Activated CD4-positive, alpha-beta T cell treated with anti-CD3 and anti-CD28 coated beads for 36 hours (primary cell): ENCODE measurements at regions of chr12 and their contacts with region 1.

Region 1: GRCh38 chr12:6335451-6336078 is 6.3 kb downstream of the TNFRSF1A start:
- DNase-seq: peak; percentile 94
- ATAC-seq: peak; percentile 83
- H3K4me3 Mint-ChIP-seq: no peak overlapping the region
- H3K27ac Mint-ChIP-seq: no peak overlapping the region
- H3K4me1 Mint-ChIP-seq: peaks cover 21% of the 10 kb centered on the region
- H3K27me3 Mint-ChIP-seq: no peaks in the 10 kb centered on the region

Region 2: GRCh38 chr12:6323340-6323994 is 12.1 kb before region 1 on chr12:
- CTCF ChIA-PET with region 1: interaction called, 21 read pairs
- POLR2A ChIA-PET with region 1: no interaction called
- intact Hi-C with region 1: no loop called
- DNase-seq: peak; percentile 58
- ATAC-seq: peak; percentile 81
- H3K4me3 Mint-ChIP-seq: peak overlapping the region; percentile 24
- H3K27ac Mint-ChIP-seq: peak overlapping the region; percentile 89
- H3K4me1 Mint-ChIP-seq: peaks cover 32% of the 10 kb centered on the region
- H3K27me3 Mint-ChIP-seq: no peaks in the 10 kb centered on the region

Region 3: DNA sequence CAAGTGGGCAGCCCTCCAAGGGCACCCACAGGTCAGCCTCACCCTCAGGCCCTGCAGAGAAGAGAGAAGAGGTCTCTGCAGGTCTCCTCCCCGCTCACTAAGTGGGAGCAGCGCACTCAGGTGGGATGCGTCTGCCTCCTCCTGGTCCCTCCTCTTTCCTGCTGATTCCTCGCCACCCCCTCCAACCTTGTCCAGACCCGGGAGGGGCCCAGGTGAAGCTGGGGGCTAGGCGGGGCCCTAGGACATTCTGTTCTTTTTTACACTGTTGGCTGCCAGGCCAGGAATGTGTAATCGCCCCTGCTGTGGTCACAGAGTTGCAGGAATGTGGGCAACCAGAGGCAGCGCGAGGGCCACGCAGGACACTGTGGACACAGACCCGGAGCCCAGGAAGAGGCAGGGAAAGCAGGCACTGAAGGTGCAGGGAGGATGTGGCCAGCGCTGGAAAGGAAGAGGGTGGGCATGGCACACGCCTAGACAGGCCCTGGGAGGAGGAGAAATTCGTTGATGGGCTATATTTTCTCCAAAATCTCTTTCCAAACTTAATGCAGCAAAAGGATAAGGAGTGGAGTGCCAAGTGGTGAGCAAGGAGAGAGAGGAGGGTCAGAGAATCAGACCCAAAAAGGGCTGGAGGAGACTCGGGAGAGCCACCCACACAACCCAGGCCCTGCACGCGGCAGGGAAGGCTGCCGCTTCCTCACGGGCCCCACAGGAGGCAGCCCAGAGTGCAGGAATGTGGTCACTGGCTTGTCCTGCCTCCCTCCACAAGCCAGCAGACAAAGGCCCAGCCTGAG is 40.7 kb after region 1 on chr12:
- CTCF ChIA-PET with region 1: interaction called, 3 read pairs
- POLR2A ChIA-PET with region 1: no interaction called
- intact Hi-C with region 1: loop called in 1 of 2 experiments (anchors 5 kb)
- DNase-seq: peak; percentile 34
- ATAC-seq: peak; percentile 38
- H3K4me3 Mint-ChIP-seq: no peak overlapping the region
- H3K27ac Mint-ChIP-seq: peak overlapping the region; percentile 75
- H3K4me1 Mint-ChIP-seq: peaks cover 26% of the 10 kb centered on the region
- H3K27me3 Mint-ChIP-seq: peaks cover 4% of the 10 kb centered on the region

Region 4: GRCh38 chr12:6430124-6430989 is 94.8 kb after region 1 on chr12:
- CTCF ChIA-PET with region 1: interaction called, 3 read pairs
- POLR2A ChIA-PET with region 1: no interaction called
- intact Hi-C with region 1: loop called in 1 of 2 experiments (anchors 2 kb)
- DNase-seq: peak; percentile 84
- ATAC-seq: no peak
- H3K4me3 Mint-ChIP-seq: peak overlapping the region; percentile 1
- H3K27ac Mint-ChIP-seq: peak overlapping the region; percentile 80
- H3K4me1 Mint-ChIP-seq: peaks cover 80% of the 10 kb centered on the region
- H3K27me3 Mint-ChIP-seq: no peaks in the 10 kb centered on the region

Region 5: GRCh38 chr12:6470375-6471163 is 135.0 kb after region 1 on chr12 and contains the start of gene VAMP1:
- CTCF ChIA-PET with region 1: interaction called, 13 read pairs
- POLR2A ChIA-PET with region 1: interaction called, 7 read pairs
- intact Hi-C with region 1: loop called in 1 of 2 experiments (anchors 1 kb)
- DNase-seq: peak; percentile 99
- ATAC-seq: peak; percentile 91
- H3K4me3 Mint-ChIP-seq: peak within 1 kb of the TSS; percentile 91
- H3K27ac Mint-ChIP-seq: peak within 1 kb of the TSS; percentile 82
- H3K4me1 Mint-ChIP-seq: peaks cover 52% of the 10 kb centered on the region
- H3K27me3 Mint-ChIP-seq: no peaks in the 10 kb centered on the region
- total RNA-seq, gene VAMP1: 34.5 to 52.3 TPM

Region 6: DNA sequence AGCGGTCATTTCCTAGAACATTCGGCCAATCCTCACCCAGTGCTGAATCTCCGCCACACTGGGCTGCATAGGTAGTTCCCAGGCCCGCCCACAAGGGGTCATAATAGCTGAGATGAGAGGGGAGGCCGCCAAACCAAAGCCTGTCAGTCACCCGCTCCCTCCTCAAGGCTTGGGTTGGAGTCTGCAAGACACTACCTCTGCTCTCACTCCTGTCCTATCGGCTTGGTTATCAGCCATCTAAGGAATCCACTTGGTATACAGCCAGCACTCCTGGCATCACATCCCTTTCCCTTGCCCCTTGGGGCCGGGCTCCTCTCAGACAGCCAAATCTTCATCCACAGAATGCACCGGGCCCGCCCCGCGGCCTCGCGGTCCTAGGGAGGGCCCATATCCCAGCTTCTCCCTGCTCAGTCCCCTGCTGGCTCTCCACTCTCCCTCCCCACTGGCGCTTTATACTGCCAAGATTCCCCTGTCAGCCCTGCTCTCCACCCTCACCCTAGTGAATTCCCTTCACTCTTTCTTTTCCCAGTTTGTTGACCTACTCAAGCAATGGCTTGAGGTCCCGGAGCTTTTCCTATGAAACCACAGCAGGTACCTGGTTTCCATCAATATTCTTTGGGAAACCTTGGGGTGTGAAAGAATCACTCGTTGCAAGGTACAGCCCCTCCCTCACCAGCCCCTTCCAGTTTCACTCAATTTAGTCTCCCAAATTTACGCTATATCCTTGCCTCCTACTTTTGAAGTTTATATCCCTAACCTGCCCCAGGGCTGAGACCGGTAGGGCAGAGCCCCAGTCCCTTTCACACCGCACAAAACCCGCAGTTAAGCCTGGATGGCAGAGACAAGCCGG is 218.8 kb after region 1 on chr12:
- CTCF ChIA-PET with region 1: no interaction called
- POLR2A ChIA-PET with region 1: no interaction called
- intact Hi-C with region 1: loop called in 1 of 2 experiments (anchors 5 kb)
- DNase-seq: peak; percentile 88
- ATAC-seq: peak; percentile 68
- H3K4me3 Mint-ChIP-seq: peak overlapping the region; percentile 91
- H3K27ac Mint-ChIP-seq: peak overlapping the region; percentile 76
- H3K4me1 Mint-ChIP-seq: peaks cover 54% of the 10 kb centered on the region
- H3K27me3 Mint-ChIP-seq: no peaks in the 10 kb centered on the region